Cardiac septum (tissue), 1 donor: ENCODE measurements at regions of chr9 and their contacts with region 1.

Region 1: DNA sequence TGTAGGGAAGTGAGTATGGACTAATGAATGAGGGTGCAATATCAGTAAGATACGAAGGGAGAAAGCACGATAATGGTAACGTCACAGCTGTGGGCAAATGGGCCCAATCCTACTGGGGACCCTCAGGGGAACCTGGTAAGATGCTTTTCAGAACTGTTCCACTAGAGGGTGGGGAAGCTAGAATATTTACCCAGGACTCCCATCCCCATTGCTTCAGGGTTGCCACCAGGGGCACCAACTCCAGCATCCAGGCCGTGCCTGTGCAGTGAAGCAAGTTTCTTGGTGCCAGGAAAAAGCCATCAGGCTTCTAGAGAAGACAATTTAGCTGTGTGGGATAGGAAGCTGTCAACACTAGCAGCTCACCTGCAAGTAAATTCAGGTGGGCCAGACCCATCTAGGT is 409.3 kb downstream of the AGTPBP1 start:
- DNase-seq: no peak

Region 2: DNA sequence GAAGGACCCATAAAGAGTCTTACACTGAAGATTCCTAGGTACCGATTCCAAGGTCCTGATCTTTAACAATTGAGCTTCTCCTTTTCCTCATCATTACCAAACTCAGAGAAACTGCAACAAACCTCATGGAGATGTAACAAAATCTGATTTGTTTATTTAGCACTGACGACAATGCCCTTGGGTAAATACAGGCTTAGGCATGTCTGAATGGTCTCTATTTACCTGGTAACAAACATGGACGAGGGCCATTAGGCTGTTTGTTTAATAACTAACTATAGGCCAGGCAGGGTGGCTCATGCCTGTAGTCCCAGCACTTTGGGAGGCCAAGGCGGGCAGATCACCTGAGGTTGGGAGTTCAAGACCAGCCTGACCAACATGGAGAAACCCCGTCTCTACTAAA is 76.0 kb after region 1 on chr9:
- intact Hi-C with region 1: loop called (anchors 5 kb)
- DNase-seq: no peak